Mammary epithelial cell (primary cell): ENCODE measurements at regions of chr10 and their contacts with region 1.

Region 1: DNA sequence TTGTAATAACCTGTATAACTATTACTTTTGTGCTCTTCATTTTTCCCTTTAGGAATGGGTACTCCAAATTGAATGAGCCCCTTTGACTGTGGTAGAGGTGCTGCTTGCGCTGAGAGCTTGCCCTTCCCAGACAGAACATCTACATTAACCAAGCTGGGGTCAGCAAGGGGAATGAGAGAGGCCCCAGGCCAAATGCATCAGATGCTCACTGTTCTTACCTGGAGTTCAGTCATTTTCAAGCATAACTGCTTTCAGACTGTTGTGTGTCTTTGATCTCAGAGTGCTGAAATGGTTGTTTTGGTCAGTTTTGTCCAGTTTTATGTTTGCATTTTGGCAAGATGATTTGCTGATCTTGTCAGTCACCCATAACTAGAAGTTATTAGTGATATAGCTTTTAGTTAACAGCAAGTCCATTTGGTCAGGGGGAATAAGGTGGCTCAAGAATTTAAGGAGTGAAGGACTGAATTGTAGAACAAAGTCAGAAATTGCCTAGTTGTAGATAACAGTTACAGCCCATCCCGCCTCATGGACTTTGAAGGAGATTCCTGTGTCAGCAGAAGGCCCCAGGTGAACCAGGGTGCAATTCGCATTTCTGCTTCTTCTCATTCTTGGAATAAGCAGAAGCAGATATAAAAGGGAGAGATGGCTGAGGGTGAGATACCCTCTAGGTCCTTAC is 7.8 kb upstream of the STN1 start:
- DNase-seq: no peak
- H3K4me3 ChIP-seq: no peak overlapping the region
- H3K27ac ChIP-seq: no peak overlapping the region
- H3K4me1 ChIP-seq: peaks cover 9% of the 10 kb centered on the region
- H3K27me3 ChIP-seq: no peaks in the 10 kb centered on the region
- CTCF ChIP-seq: no peak

Region 2: DNA sequence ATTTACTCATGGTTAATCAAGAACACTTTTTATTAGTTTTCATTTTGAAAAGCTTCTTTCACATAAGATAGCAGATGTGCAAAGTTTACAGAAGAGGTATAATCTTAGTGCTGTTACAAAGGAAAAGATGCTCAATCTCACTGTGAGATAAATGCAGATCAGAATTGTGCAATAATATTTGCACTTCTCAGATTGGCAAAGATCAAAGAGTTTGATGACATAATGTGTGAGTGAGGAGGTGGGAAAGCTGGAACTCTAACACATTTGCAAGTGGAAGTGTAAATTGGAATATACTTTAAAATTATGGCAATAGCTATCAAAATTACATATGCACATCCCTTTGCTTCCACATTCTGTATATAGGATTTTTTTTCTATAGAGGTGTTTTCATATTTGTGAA is 13.8 kb after region 1 on chr10:
- CTCF ChIA-PET with region 1: no interaction called
- dilution Hi-C with region 1: no loop called
- in situ Hi-C with region 1: no loop called
- intact Hi-C with region 1: loop called (anchors 2 kb)
- DNase-seq: no peak
- H3K4me3 ChIP-seq: no peak overlapping the region
- H3K27ac ChIP-seq: no peak overlapping the region
- H3K4me1 ChIP-seq: peaks cover 24% of the 10 kb centered on the region
- H3K27me3 ChIP-seq: no peaks in the 10 kb centered on the region
- CTCF ChIP-seq: no peak